PC-3 (cell line): ENCODE measurements at regions of chr3 and their contacts with region 1.

Region 1: DNA sequence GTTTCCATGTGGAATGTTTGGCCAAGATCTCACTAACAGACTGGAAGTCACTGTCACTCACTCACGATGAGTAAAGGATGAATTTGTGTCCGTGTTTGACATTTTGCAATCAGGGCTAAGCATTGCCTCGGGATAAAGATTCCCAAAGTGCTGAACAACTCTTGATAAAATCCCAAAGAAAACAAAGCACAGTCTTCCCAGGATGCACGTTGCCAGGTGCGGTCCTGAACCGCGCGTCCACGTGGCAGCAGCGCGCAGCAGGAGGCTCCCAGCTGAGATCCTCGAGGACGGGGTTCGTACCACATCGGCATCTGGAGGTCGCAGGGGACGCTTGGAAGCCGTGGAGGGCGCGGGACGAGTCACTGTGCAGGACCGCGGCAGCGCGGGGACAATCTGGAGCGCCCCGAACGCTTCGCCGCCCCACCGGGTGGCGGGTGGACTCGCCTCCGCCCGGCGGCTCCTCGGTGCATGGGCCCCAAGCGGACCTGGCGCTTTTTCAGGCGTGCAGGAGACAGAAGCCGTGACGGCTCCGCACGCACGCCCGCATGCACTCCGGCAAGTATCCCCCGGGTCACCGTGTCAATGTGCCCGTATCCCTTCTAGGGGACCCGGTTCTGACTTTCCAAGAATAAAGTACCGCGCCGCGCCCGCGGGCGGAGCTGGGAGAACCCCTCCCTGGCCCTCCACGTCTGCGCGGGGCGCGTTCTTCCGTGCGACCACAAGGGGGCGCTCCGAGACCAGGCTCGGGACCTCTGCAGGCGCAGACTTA is 17.7 kb downstream of the CPN2 start:
- DNase-seq: peak; percentile 95
- ATAC-seq: peak; percentile 94
- H3K4me3 ChIP-seq: peak overlapping the region; percentile 63
- H3K27ac ChIP-seq: peak overlapping the region; percentile 81
- H3K4me1 ChIP-seq: peaks cover 43% of the 10 kb centered on the region
- H3K27me3 ChIP-seq: no peaks in the 10 kb centered on the region
- CTCF ChIP-seq: peak; percentile 98

Region 2: DNA sequence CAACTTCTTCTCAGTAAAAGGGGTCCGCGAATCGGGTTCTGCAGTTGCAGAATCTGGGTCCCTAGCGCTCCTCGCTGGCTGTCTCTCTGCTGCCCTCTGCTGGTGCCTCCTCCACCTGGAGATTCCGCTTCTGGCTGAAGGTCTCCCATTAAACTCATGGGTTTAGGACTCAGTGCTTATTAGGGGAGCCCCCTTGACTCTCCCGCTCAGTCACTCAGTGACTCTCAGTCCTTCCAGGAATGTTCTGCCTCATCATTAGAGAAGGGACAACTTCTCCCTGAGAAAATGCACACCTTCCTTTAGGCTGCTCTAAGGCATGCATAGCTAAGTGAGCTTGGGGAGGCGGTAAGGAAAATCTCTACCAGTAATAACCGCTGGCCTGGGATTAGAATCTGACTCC is 10.6 kb after region 1 on chr3:
- CTCF ChIA-PET with region 1: interaction called, 3 read pairs
- POLR2A ChIA-PET with region 1: no interaction called
- intact Hi-C with region 1: loop called (anchors 1 kb)
- DNase-seq: peak; percentile 82
- ATAC-seq: peak; percentile 91
- H3K4me3 ChIP-seq: no peak overlapping the region
- H3K27ac ChIP-seq: no peak overlapping the region
- H3K4me1 ChIP-seq: no peaks in the 10 kb centered on the region; the same call in 1 of the 2 replicates
- H3K27me3 ChIP-seq: no peaks in the 10 kb centered on the region
- CTCF ChIP-seq: peak; percentile 98

Region 3: GRCh38 chr3:194404365-194405140 is 71.2 kb after region 1 on chr3:
- CTCF ChIA-PET with region 1: no interaction called
- POLR2A ChIA-PET with region 1: no interaction called
- intact Hi-C with region 1: loop called (anchors 1 kb)
- DNase-seq: peak; percentile 75
- ATAC-seq: no peak
- H3K4me3 ChIP-seq: no peak overlapping the region
- H3K27ac ChIP-seq: no peak overlapping the region
- H3K4me1 ChIP-seq: peaks cover 8% of the 10 kb centered on the region; the same call in 1 of the 2 replicates
- H3K27me3 ChIP-seq: no peaks in the 10 kb centered on the region
- CTCF ChIP-seq: peak; percentile 86

Region 4: DNA sequence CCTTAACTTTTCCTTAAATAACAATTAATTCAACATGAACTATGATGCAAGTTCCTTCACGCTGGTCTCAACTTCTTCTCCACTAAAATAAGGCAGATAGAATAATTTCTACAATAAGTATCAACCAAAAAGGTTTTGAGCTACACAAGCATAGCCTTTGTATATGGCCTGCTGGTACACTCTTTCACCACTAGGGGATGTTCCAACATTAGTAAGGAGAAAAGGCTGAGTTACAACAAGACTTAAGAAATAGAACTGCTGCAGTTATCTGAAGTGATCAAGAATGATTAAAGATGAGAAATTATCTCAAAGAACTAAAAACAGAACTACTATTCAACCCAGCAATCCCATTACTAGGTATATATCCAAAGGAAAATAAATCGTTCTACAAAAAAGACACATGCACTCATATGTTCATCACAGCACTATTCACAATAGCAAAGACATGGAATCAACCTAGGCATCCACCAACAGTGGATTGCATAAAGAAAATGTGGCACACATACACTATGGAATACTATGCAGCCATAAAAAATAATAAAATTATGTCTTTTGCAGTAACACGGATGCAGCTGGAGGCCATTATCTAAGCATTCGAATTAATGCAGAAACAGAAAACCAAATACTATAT is 139.0 kb after region 1 on chr3:
- CTCF ChIA-PET with region 1: no interaction called
- POLR2A ChIA-PET with region 1: no interaction called
- intact Hi-C with region 1: no loop called
- DNase-seq: peak; percentile 85
- ATAC-seq: peak; percentile 84
- H3K4me3 ChIP-seq: no peak overlapping the region
- H3K27ac ChIP-seq: no peak overlapping the region
- H3K4me1 ChIP-seq: no peaks in the 10 kb centered on the region
- H3K27me3 ChIP-seq: no peaks in the 10 kb centered on the region
- CTCF ChIP-seq: peak; percentile 95

Region 5: DNA sequence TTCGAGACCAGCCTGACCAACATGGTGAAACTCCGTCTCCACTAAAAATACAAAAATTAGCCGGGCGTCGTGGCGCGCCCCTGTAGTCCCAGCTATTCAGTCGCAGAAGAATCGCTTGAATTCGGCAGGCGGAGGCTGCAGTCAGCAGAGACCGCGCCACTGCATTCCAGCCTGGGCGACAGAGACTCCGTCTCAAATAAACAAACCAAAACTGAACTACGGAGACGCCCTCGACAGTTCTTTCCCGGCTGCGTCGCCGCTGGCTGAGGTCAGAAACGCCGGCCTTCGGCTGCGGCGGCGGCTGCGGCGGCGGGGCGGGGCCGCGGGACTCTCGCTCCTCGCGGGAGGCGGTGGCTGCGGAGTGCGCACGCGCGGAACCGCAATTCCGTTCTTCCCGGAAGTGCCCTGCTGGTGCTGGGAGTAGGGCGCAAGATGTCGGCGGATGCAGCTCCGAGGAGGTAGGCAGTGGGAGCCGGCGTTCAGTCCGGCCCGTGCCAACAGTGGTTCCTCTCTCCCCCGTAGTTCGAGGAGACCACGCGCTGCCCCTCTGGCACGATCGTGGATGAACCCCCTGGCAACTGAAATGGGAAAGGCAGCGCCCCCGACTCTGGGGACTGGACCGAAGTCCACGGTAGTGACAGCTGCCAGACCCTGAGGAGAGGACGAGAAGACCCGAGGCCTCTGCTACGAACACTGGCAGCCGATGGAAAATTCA is 250.4 kb after region 1 on chr3:
- CTCF ChIA-PET with region 1: no interaction called
- POLR2A ChIA-PET with region 1: no interaction called
- intact Hi-C with region 1: no loop called
- DNase-seq: peak; percentile 96
- ATAC-seq: peak; percentile 82
- H3K4me3 ChIP-seq: peak overlapping the region; percentile 98
- H3K27ac ChIP-seq: peak overlapping the region; percentile 82
- H3K4me1 ChIP-seq: peaks cover 39% of the 10 kb centered on the region
- H3K27me3 ChIP-seq: no peaks in the 10 kb centered on the region
- CTCF ChIP-seq: no peak

Region 6: DNA sequence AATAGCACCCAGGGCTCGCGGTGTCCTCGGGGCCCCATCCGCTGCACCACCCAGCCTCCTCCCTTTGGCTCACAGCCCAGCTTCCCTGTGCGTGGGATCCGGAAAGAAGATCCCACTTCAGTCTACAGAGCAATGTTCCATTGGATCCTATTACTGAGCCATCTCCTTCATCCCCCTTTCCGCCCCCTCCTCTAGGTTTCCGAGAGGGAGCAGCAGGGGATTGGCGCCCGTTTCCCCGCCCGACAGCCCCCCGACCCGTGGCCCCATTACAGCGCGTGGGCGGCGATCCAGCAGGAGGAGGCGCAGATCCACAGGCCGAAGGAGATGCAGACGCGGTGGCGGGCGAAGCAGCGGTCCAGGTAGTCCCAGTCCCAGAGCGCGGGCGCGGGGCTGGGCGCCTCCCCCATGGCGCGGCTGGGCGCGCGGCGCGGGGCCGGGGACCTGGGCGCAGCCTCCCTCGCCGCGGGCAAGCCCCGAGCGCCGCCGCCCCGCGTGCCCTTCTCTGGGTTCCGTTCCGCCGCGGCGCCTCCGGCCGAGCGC is 299.5 kb after region 1 on chr3:
- CTCF ChIA-PET with region 1: no interaction called
- POLR2A ChIA-PET with region 1: no interaction called
- intact Hi-C with region 1: loop called (anchors 1 kb)
- DNase-seq: peak; percentile 37
- ATAC-seq: peak; percentile 67
- H3K4me3 ChIP-seq: peak overlapping the region; percentile 96
- H3K27ac ChIP-seq: 0 out of 2 replicates have a peak overlapping the region, but pooled peaks have one; percentile 37
- H3K4me1 ChIP-seq: no peaks in the 10 kb centered on the region
- H3K27me3 ChIP-seq: no peaks in the 10 kb centered on the region
- CTCF ChIP-seq: no peak

Region 7: DNA sequence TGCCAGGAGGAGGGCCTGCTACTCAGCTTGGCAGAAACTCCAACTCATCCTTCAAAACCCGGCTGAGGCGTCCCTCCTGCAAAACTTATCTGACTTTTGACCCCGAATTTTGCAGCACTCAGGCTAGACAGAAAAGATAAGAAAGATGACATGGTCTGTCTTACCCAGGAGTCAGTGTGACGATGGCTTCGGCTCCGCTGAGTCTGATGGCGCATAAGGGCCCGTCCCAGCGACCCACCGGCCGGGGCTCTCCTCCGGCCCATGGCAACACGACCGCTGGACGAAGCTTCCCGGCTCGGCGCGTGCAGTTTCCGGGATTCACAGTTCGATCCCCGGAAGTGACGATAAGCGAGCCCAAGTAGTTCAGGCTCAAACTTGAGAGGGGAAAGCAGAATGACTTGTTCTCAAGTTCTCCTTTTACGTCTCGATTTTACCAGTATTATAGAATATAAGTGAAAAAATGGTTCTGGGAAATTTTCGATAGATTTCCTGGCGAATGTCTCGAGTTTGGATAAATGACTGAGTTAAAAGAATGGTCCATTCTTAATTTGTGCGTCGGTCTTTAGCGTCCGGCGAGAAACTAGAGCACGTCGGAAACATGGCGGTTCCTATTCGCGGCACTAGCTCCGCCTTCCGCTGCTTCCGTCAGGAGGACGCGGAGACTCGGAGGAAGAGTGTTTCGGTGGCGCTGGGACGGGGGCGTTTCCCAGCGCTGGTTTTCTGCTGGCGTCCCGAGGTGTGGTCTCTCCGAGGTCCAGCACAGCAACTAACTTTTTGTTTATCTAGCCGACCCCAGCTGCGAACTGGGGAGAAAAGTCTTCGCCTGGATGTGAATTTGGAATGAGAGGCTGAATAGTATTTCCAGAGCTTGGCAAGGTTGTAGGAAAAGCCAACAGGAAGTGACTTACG is 338.8 kb after region 1 on chr3 and contains the start of gene LSG1:
- CTCF ChIA-PET with region 1: no interaction called
- POLR2A ChIA-PET with region 1: interaction called, 3 read pairs
- intact Hi-C with region 1: loop called (anchors 5 kb)
- DNase-seq: peak; percentile 97
- ATAC-seq: peak; percentile 96
- H3K4me3 ChIP-seq: peak within 1 kb of the TSS; percentile 87
- H3K27ac ChIP-seq: peak within 1 kb of the TSS; percentile 71
- H3K4me1 ChIP-seq: peaks cover 14% of the 10 kb centered on the region
- H3K27me3 ChIP-seq: no peaks in the 10 kb centered on the region
- CTCF ChIP-seq: no peak
- total RNA-seq, gene LSG1: 83.8 and 102 TPM in 2 replicates